ENCODE measurements at regions of chr12 and their contacts with region 1.

Region 1: GRCh38 chr12:104381731-104382480 is 74.8 kb upstream of the CHST11 start:
- DNase-seq: peak; percentile 78 to 90
- ATAC-seq: peak; percentile 91
- H3K4me3 ChIP-seq: no peak overlapping the region
- H3K27ac ChIP-seq: no peak overlapping the region
- H3K4me1 ChIP-seq: no peaks in the 10 kb centered on the region
- H3K27me3 ChIP-seq: no peaks in the 10 kb centered on the region

Region 2: DNA sequence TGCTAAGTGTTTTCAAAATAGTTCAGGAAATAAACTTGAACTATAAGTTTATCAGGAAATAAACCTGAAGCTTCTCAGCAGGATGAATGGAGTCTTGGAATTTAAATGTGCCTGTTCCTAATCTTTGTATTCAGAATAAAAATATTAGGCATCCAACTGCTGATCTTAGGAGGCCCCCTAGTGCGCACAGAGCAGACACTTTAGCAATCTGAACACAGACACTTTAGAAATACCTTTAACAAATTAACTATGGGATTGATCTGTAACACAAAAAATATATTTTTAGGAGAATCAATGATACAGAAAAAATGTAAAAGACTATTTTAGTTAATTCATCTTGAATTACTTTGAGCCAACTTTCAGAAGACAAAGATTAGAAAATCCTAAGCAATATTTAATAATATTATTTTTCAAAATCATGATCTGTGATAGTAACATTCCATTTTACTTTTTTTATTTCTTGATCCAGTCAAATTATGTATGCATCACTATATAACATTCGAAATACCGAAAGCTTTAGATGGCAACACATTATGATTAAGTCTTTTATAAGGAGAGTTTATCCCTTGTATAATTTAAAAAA is 495.3 kb after region 1 on chr12:
- intact Hi-C with region 1: loop called (anchors 5 kb)
- DNase-seq: no peak
- ATAC-seq: peak; percentile 74
- H3K4me3 ChIP-seq: no peak overlapping the region
- H3K27ac ChIP-seq: no peak overlapping the region
- H3K4me1 ChIP-seq: no peaks in the 10 kb centered on the region
- H3K27me3 ChIP-seq: no peaks in the 10 kb centered on the region